ENCODE measurements at regions of chr16 and their contacts with region 1.

Region 1: DNA sequence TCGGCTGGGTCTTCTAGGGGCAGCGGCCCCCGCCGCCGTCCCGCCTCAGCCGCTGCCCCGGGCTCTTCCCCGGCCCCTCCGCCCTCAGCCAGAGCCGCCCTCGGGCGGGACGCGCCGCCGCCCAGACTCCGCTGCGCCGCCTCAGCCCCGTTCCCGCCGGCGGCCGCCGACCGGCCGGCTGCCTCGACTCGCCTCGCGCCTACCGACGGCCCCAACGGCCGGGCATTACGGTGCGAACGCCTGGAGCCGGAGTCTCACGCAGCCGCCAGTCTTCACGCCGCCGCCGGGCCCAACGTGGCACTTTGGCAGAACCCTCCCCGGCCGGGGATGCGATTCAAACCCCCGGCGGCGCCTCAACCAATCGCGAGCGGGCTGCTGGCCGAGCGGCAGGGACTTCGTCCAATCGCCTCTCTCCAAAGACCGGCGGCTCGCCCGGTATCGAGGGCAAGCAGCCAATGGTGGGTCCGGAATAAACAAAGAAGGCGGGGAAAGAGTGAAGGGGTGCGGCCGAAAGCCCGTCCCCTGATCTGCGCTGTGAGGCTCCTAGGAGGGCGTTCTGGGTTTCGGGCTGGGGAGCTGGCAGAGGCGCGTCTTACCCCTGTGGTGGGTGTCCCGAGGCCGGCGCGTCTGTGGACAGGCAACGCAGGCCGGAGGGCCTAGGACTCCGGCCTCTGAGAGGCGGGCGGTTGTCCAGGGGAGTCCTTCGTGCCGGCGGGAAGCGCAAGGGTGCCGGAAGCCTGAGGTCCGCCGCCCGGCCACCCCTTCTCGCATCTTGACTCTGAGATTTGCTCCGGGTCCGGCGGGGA is at the start of gene CDR2:
- DNase-seq: peak; percentile 90 to 99
- H3K4me3 ChIP-seq: peak within 1 kb of the TSS; percentile 97 to 98
- H3K27ac ChIP-seq: peak within 1 kb of the TSS; percentile 92 to 93
- H3K4me1 ChIP-seq: peaks cover 11 to 12% of the 10 kb centered on the region in 2 donors
- H3K27me3 ChIP-seq: no peaks in the 10 kb centered on the region
- CTCF ChIP-seq: no peak
- total RNA-seq, gene CDR2: 36.3 TPM

Region 2: DNA sequence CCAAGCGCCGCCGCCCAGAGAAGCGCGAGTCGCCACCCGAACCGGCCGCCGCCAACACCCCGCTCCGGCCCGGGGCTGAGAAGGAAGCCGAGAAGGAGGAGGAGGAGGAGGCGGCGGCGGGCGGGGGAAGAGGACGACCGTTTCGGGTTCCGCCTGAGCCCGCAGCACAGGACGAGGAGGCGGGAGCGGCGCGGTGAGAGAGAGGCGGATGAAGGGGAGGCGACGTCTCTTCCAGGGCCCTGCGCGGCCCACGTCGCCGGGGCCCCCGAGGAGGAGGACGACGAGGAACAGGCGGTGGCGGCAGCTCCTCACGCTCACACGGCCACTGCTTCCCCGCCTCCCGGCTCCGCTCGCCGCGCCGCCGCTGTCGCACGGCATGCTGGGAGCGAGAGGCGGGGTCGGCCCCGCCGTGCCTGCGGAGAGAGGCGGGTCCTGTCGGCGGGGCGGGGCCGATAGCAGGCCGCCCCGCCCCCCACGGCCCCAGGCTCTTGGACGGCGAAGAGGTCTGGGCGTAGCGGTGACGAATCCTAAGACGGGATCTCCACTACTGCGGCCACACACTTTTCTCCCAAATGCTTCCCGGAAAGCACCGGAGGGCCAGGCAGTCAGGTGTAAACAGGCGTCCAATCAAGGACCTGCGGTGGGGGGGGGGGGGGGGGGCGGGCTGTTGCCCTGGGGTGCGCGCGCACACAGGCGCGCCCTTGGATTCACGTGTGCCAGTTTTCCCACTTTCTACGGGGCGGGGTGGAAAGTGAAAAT is 872.4 kb before region 1 on chr16:
- intact Hi-C with region 1: loop called (anchors 10 kb)
- DNase-seq: peak; percentile 75 to 95
- H3K4me3 ChIP-seq: peak overlapping the region; percentile 64 to 90
- H3K27ac ChIP-seq: peak overlapping the region; percentile 93 to 97
- H3K4me1 ChIP-seq: peaks cover 0 to 4% of the 10 kb centered on the region in 2 donors
- H3K27me3 ChIP-seq: no peaks in the 10 kb centered on the region
- CTCF ChIP-seq: no peak

Region 3: DNA sequence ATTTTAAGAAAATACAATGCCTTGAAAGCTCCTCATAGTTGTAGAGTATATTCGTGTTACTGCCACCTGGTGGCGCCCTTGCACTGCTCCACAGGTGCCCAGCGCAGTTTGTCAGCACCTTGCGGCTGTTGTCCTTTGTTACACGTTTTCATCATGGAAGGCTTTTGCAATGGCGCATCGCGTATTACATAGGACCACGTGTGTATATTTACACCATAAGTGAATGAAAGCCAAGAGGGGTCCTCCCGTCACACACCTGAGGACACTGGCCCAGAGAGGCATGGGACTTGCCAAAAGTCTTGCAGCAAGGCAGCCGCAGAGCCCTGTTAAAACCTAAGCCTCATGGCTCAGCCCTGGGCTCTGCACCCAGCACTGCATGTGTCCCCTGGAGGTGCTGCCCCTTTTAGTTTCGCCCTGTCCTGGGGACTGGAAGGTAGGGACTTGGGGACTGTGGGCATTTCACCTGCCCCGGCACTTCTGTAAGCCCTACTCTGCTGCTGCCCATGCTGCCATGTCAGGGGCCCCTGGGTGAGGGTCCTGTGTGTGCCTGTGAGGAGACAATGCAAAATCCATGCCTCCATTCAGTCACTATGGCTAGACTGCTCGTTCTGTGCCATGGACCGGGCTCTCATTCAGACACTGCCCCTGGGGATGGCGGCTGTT is 53.0 kb before region 1 on chr16:
- intact Hi-C with region 1: loop called (anchors 5 kb)
- DNase-seq: no peak
- H3K4me3 ChIP-seq: no peak overlapping the region
- H3K27ac ChIP-seq: no peak overlapping the region
- H3K4me1 ChIP-seq: peaks cover 0 to 4% of the 10 kb centered on the region in 2 donors
- H3K27me3 ChIP-seq: no peaks in the 10 kb centered on the region
- CTCF ChIP-seq: peak; percentile 85 to 88 (median 87)

Region 4: GRCh38 chr16:22346483-22346882 is 28.0 kb before region 1 on chr16:
- intact Hi-C with region 1: no loop called
- DNase-seq: no peak
- H3K4me3 ChIP-seq: no peak overlapping the region
- H3K27ac ChIP-seq: peak overlapping the region in 1 of 2 donors; percentile 49
- H3K4me1 ChIP-seq: peaks cover 5% of the 10 kb centered on the region in 2 donors
- H3K27me3 ChIP-seq: no peaks in the 10 kb centered on the region
- CTCF ChIP-seq: no peak

Region 5: GRCh38 chr16:22424161-22424937 is 49.8 kb after region 1 on chr16:
- intact Hi-C with region 1: loop called (anchors 2 kb)
- DNase-seq: peak; percentile 34 to 90
- H3K4me3 ChIP-seq: peak overlapping the region; percentile 39 to 57
- H3K27ac ChIP-seq: peak overlapping the region; percentile 86 to 87
- H3K4me1 ChIP-seq: peaks cover 2 to 15% of the 10 kb centered on the region in 2 donors
- H3K27me3 ChIP-seq: no peaks in the 10 kb centered on the region
- CTCF ChIP-seq: no peak